OCI-LY7 (cell line): ENCODE measurements at regions of chr12 and their contacts with region 1.

Region 1: GRCh38 chr12:98259693-98260092 is 255.7 kb upstream of the TMPO start:
- DNase-seq: peak; percentile 80
- H3K4me3 ChIP-seq: peak overlapping the region; percentile 52
- H3K27ac ChIP-seq: peak overlapping the region; percentile 93
- H3K4me1 ChIP-seq: peaks cover 90% of the 10 kb centered on the region
- CTCF ChIP-seq: no peak

Region 2: DNA sequence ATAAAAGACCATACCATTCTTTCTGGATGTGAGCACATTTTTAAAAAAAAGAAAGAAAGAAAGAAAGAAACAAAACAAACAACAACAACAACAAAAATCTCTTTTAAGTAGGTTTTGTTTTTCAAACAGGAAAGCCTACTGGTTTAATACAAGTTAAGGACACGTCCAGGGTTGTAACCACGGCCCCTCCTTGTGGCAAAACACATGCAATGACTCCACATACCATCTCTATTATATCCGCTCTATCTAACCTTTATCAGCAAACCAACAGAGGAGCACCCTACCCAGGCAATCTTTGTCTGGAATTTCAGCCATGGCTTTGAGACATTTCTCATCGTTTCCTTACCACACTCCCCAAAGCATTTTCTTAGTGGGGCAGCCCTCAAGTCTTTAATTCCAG is 104.8 kb before region 1 on chr12:
- CTCF ChIA-PET with region 1: no interaction called
- POLR2A ChIA-PET with region 1: interaction called, 3 read pairs
- intact Hi-C with region 1: loop called (anchors 5 kb)
- DNase-seq: peak; percentile 53
- H3K4me3 ChIP-seq: no peak overlapping the region
- H3K27ac ChIP-seq: no peak overlapping the region
- H3K4me1 ChIP-seq: peaks cover 24% of the 10 kb centered on the region
- CTCF ChIP-seq: peak; percentile 70

Region 3: DNA sequence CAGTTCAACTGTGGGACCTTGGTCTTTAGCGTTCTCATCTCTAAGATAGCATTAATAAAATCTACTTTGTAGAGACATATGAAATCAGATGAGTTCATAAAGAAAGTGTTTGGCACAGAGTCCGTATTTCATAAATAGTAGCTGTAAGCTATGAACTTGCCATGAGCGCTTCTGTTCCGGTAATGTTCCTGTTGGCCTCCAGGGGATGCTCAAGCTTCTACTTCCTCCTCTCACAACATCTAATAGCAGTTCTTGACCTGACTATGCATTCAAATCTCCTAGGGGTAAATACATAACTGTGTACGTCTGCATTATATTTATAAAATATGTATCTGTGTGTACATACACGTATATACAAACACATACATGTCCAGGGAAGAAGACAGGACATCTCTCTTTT is 32.5 kb before region 1 on chr12:
- CTCF ChIA-PET with region 1: interaction called, 3 read pairs
- POLR2A ChIA-PET with region 1: interaction called, 17 read pairs
- intact Hi-C with region 1: loop called (anchors 1 kb)
- DNase-seq: peak; percentile 20
- H3K4me3 ChIP-seq: no peak overlapping the region
- H3K27ac ChIP-seq: no peak overlapping the region
- H3K4me1 ChIP-seq: peaks cover 52% of the 10 kb centered on the region
- CTCF ChIP-seq: peak; percentile 71

Region 4: DNA sequence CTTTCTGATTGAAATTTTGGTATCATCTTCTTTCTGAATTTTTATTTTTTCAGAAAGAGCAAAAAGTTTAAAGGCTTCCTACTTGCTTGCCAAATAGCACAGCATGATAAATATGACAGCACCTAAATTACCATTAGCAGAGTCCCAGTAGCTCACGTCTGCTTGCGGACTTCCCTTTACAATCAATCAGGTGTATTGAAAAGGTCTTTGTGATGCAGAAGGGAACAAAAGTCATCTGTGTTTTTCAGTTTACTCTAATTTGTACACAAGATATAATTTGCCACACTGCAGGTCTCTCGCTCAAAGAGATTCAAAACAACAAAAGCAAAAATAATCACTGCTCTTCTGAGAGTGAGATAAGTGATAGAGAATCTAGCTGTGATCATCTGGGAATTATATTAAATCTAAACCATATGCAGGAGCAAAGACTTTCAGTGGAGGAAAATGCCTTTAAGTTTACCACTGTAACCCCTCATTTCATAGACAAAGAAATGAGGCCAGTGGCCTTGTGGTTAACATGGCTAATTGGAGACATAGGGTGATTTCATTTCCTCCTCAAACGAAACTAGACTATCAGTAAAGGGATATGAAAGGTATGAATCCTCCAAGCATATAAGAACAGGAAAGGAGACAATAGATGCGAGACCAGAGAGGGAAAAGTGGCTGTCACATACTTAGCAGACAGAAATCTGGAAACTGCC is 14.9 kb after region 1 on chr12:
- CTCF ChIA-PET with region 1: interaction called, 15 read pairs
- POLR2A ChIA-PET with region 1: interaction called, 47 read pairs
- intact Hi-C with region 1: loop called (anchors 1 kb)
- DNase-seq: peak; percentile 85
- H3K4me3 ChIP-seq: peak overlapping the region; percentile 57
- H3K27ac ChIP-seq: peak overlapping the region; percentile 90
- H3K4me1 ChIP-seq: peaks cover 43% of the 10 kb centered on the region
- CTCF ChIP-seq: no peak

Region 5: GRCh38 chr12:98332642-98333041 is 72.9 kb after region 1 on chr12:
- CTCF ChIA-PET with region 1: interaction called, 3 read pairs
- POLR2A ChIA-PET with region 1: no interaction called
- intact Hi-C with region 1: loop called (anchors 1 kb)
- DNase-seq: peak; percentile 80
- H3K4me3 ChIP-seq: no peak overlapping the region
- H3K27ac ChIP-seq: no peak overlapping the region
- H3K4me1 ChIP-seq: peaks cover 35% of the 10 kb centered on the region
- CTCF ChIP-seq: peak; percentile 71

Region 6: DNA sequence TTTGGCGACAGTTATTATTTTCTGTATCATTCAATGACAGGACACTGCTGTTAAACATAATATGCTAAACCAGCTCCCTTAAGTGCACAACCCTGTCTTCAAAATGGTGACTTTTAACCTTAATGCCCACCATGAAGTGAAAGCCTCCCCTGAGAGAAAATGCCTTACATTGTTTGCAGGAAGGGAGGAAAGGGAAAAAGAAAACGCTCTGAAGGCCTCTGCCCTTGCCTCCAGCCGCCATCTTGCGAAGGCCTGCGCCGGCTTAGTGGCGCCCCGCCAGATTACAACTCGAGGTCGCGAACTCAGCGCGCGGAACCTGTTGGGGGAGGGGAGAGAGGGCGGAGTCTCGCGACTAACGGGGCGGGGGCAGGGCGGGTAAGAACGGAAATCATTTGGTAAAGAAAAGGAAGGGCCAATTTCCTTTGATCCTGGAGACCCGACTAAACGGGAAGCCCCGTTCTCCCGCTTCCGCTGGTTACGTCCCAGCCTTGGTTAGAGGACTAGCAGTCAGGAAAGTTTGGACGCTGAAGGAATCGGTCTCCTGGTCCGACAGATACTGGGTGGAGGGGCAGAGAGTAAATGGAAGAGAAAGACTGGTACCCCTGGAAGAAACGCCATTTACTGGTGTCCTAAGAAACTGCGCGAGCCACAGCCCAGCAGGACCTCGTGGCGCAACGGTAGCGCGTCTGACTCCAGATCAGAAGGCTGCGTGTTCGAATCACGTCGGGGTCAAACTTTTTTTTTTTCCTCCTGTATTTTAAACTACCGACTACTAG is 244.1 kb after region 1 on chr12:
- CTCF ChIA-PET with region 1: no interaction called
- POLR2A ChIA-PET with region 1: no interaction called
- intact Hi-C with region 1: loop called (anchors 5 kb)
- DNase-seq: peak; percentile 96
- H3K4me3 ChIP-seq: peak overlapping the region; percentile 69
- H3K27ac ChIP-seq: peak overlapping the region; percentile 95
- H3K4me1 ChIP-seq: peaks cover 17% of the 10 kb centered on the region
- CTCF ChIP-seq: 0 out of 2 replicates have a peak, but pooled peaks have one; percentile 20